HepG2 (cell line): ENCODE measurements at regions of chr11 and their contacts with region 1.

Region 1: GRCh38 chr11:120391292-120391691 is 55.1 kb downstream of the ARHGEF12 start:
- DNase-seq: peak; percentile 92
- ATAC-seq: peak; percentile 99
- H3K4me3 ChIP-seq: peak overlapping the region in 2 of 3 experiments; percentile 38 to 39; a peak in 2 of 6 replicates
- H3K27ac ChIP-seq: peak overlapping the region; percentile 82
- H3K4me1 ChIP-seq: peaks cover 72% of the 10 kb centered on the region
- H3K27me3 ChIP-seq: no peaks in the 10 kb centered on the region
- CTCF ChIP-seq: no peak
- EP300 ChIP-seq: no peak
- POLR2A ChIP-seq: no peak
- RAD21 ChIP-seq: no peak

Region 2: GRCh38 chr11:120372296-120372695 is 19.0 kb before region 1 on chr11:
- CTCF ChIA-PET with region 1: no interaction called
- POLR2A ChIA-PET with region 1: interaction called, 4 read pairs
- in situ Hi-C with region 1: no loop called
- intact Hi-C with region 1: loop called (anchors 2 kb)
- DNase-seq: peak; percentile 64
- ATAC-seq: peak; percentile 97
- H3K4me3 ChIP-seq: peak overlapping the region in 1 of 3 experiments; percentile 14; a peak in 1 of 6 replicates
- H3K27ac ChIP-seq: peak overlapping the region; percentile 70
- H3K4me1 ChIP-seq: peaks cover 52% of the 10 kb centered on the region
- H3K27me3 ChIP-seq: no peaks in the 10 kb centered on the region; a peak in 1 of 5 replicates
- CTCF ChIP-seq: no peak
- EP300 ChIP-seq: no peak
- POLR2A ChIP-seq: no peak
- RAD21 ChIP-seq: no peak

Region 3: GRCh38 chr11:120517390-120517761 is 126.1 kb after region 1 on chr11:
- CTCF ChIA-PET with region 1: no interaction called
- POLR2A ChIA-PET with region 1: no interaction called
- in situ Hi-C with region 1: no loop called
- intact Hi-C with region 1: no loop called
- DNase-seq: no peak
- ATAC-seq: peak; percentile 61
- H3K4me3 ChIP-seq: peak overlapping the region in 1 of 3 experiments; percentile 17; a peak in 1 of 6 replicates
- H3K27ac ChIP-seq: no peak overlapping the region
- H3K4me1 ChIP-seq: peaks cover 16% of the 10 kb centered on the region
- H3K27me3 ChIP-seq: peaks cover 6 to 61% of the 10 kb centered on the region in 2 experiments
- CTCF ChIP-seq: no peak
- EP300 ChIP-seq: no peak
- POLR2A ChIP-seq: no peak
- RAD21 ChIP-seq: no peak